OCI-LY7 (cell line): ENCODE measurements at regions of chr5 and their contacts with region 1.

Region 1: DNA sequence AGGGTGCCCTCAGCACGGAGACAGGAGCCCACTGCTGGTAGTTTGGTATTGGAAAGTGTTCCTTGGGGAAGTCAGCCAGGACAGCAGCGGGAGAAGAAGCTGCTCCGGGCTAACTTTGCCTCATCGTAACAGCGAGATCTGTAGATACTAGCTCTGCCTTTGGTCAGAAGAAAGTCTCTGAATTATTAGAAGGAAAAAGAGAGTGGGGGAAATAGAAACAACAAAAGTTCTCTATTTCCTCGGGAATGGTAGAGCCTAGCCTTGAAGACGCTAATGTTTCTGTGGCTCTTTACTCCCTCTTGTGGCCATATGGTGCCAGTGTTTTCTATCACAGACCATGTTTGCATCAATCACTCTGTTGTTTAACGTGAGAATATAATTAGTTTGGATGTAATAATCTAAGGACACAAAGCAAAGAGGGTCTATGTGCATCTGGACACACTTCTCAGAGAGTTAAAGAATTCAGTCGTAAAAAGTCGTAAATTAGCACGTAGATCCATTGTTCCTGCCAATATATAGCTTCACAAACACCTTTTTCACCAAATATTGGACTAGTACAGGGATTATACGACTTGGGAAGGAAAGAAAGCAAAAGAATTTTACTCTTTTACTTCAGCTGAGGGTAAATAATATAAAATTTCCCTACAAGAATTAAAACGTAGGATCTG is 40.2 kb upstream of the HSD17B4 start:
- DNase-seq: peak; percentile 79
- H3K4me3 ChIP-seq: peak overlapping the region; percentile 55
- H3K27ac ChIP-seq: no peak overlapping the region
- H3K4me1 ChIP-seq: peaks cover 37% of the 10 kb centered on the region
- CTCF ChIP-seq: peak; percentile 99

Region 2: GRCh38 chr5:119022017-119022745 is 389.9 kb before region 1 on chr5:
- CTCF ChIA-PET with region 1: interaction called, 4 read pairs
- POLR2A ChIA-PET with region 1: interaction called, 5 read pairs
- intact Hi-C with region 1: loop called (anchors 1 kb)
- DNase-seq: peak; percentile 79
- H3K4me3 ChIP-seq: no peak overlapping the region
- H3K27ac ChIP-seq: peak overlapping the region; percentile 71
- H3K4me1 ChIP-seq: peaks cover 73% of the 10 kb centered on the region
- CTCF ChIP-seq: peak; percentile 94

Region 3: GRCh38 chr5:119267958-119268386 is 144.1 kb before region 1 on chr5:
- CTCF ChIA-PET with region 1: interaction called, 3 read pairs
- POLR2A ChIA-PET with region 1: interaction called, 4 read pairs
- intact Hi-C with region 1: loop called (anchors 2 kb)
- DNase-seq: peak; percentile 84
- H3K4me3 ChIP-seq: peak overlapping the region; percentile 84
- H3K27ac ChIP-seq: peak overlapping the region; percentile 60
- H3K4me1 ChIP-seq: peaks cover 45% of the 10 kb centered on the region
- CTCF ChIP-seq: 0 out of 2 replicates have a peak, but pooled peaks have one; percentile 34

Region 4: GRCh38 chr5:119360905-119361593 is 51.0 kb before region 1 on chr5:
- CTCF ChIA-PET with region 1: no interaction called
- POLR2A ChIA-PET with region 1: interaction called, 3 read pairs
- intact Hi-C with region 1: loop called (anchors 1 kb)
- DNase-seq: no peak
- H3K4me3 ChIP-seq: no peak overlapping the region
- H3K27ac ChIP-seq: no peak overlapping the region
- H3K4me1 ChIP-seq: peaks cover 63% of the 10 kb centered on the region
- CTCF ChIP-seq: no peak

Region 5: GRCh38 chr5:119470851-119471451 is 58.9 kb after region 1 on chr5:
- CTCF ChIA-PET with region 1: no interaction called
- POLR2A ChIA-PET with region 1: no interaction called
- intact Hi-C with region 1: no loop called
- DNase-seq: peak; percentile 40
- H3K4me3 ChIP-seq: no peak overlapping the region
- H3K27ac ChIP-seq: no peak overlapping the region
- H3K4me1 ChIP-seq: no peaks in the 10 kb centered on the region
- CTCF ChIP-seq: peak; percentile 90